Ovary (tissue), 10 donors: ENCODE measurements at regions of chr11 and their contacts with region 1.

Region 1: DNA sequence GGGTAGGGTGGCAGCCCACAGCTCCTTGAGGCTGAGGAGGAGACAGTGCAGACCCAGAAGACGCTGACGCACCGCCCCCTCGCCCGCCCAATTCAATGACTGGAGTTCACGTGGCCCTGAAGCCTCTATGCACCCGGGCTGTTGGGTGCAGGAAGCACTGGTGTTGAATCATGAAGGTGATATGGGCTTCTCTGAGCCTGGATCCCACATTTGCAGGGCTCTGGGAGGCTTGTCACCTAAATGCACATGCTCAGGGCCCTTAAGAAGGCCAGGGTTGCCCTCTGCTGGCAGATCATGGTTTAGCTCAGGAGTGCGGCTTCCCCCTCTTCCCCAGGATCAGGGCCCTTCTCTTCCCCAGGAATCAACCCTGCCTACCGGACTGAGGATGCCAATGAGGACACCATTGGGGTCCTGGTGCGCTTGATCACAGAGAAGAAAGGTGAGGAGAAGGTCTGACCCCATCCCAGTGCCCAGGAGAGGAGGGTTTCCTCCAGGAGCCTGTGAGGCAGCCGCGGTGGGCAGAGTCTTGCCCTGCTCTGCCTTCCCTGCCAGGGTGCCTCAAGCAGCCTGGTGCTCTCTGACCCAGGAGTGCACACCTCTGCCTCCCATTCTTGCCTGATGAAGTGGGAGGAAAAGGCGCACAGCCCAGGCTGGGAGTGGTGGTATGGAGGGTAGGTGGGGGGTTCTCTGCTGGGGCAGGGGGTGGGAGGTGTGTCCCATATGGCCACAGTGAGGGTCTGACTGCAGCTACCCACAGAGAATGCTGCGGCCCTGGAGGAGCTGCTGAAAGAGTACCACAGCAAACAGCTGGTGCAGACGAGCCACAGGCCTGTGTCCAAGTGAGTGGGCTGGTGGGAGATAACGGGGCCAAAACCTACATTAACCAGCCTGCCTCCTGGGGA is 17.5 kb downstream of the RELT start:
- DNase-seq: peak; percentile 46 to 78 (median 70)
- H3K4me3 ChIP-seq: no peak overlapping the region
- H3K27ac ChIP-seq: no peak overlapping the region
- H3K4me1 ChIP-seq: no peaks in the 10 kb centered on the region
- H3K27me3 ChIP-seq: no peaks in the 10 kb centered on the region
- CTCF ChIP-seq: peak; percentile 33 to 70 (median 63)
- EP300 ChIP-seq: no peak
- POLR2A ChIP-seq: no peak

Region 2: DNA sequence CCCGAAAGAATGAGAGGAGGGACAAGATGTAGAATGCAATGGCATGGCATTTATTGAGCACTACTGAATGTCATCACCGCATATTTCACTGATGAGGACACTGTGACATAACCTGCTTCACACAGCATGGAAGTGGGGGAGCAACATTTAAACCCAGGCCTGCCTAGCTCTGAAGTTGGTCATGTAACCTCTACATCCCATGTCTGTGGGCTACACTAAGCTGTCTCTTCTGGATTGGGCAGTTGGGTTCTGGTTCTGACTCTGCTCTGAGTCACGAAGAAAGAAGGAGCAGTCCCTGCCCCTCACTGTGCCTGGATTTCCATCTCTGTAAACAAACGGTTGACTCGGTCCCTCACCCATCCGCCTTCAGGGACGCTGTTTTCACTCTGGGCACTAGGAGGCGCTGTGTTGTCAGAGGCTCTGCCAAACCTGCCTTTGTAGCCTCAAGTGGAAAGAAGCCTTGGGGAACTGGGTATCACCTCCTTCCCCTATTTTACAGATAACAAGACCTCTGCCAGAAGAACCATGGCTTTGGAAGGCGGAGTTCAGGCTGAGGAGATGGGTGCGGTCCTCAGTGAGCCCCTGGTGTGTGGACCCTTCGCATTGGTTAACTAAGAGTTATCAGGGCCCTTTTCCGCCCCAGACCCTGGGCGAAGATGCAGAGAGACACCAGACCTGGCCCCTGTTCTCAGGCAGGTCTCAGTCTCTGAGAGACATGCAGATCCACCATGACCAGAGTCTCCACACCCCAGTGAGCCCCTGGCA is 98.3 kb before region 1 on chr11:
- intact Hi-C with region 1: loop called in 2 of 4 experiments (anchors 5 to 10 kb)
- DNase-seq: peak; percentile 38 to 74 (median 68)
- H3K4me3 ChIP-seq: no peak overlapping the region
- H3K27ac ChIP-seq: no peak overlapping the region
- H3K4me1 ChIP-seq: no peaks in the 10 kb centered on the region
- H3K27me3 ChIP-seq: no peaks in the 10 kb centered on the region
- CTCF ChIP-seq: peak; percentile 33 to 56 (median 50)
- EP300 ChIP-seq: no peak
- POLR2A ChIP-seq: no peak